IMR-90 (cell line): ENCODE measurements at regions of chr16 and their contacts with region 1.

Region 1: GRCh38 chr16:50806099-50807062 is 64.5 kb downstream of the CYLD start:
- DNase-seq: peak; percentile 87
- ATAC-seq: peak; percentile 92
- H3K4me3 ChIP-seq: peak overlapping the region; percentile 45
- H3K27ac ChIP-seq: no peak overlapping the region; the same call in 1 of the 2 replicates
- H3K4me1 ChIP-seq: peaks cover 4% of the 10 kb centered on the region
- H3K27me3 ChIP-seq: no peaks in the 10 kb centered on the region
- CTCF ChIP-seq: peak; percentile 84
- POLR2A ChIP-seq: no peak
- RAD21 ChIP-seq: peak; percentile 78

Region 2: DNA sequence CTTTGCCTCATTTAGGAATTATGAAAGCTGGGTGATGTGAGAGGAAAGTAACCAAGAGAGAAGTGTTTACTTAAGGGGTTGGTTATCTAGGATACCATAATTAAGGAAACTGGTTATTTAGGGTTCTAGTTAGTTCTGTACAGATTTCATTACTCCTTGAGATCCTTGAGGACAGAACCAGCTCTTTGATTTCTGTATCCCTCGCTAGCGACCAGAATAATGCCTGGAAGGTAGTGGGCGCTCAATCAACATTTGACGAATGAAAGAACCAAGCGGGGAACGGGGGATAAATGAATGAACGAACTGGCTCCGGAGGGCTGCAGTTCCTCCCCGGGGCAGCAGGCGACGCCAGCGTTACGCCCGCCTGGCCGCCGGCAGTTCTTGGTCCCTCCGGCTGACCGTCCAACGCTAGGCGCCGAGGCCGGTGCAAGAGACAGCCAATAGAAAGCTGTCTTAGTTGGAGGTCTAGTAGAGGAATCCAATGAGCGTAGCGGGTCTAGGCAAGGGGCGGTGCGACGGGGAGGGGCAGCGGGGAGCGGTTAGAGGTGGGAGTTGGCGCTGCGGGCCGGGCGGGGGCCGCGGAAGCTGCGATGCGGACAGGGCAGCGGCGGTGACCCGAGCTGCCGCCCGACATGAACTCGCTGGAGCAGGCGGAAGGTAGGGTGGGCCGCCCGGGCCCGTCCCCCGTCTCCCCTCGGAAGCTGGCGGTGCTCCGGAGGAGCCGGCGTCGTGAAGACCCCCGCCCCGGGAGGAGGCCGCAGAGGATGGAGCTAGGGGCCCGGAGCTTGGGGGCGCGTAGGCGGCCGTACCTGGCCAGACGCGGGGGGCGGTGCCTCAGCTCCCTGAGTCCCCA is 781.5 kb before region 1 on chr16 and contains the start of gene CNEP1R1:
- CTCF ChIA-PET with region 1: interaction called, 4 read pairs
- POLR2A ChIA-PET with region 1: no interaction called
- dilution Hi-C with region 1: no loop called
- in situ Hi-C with region 1: no loop called
- intact Hi-C with region 1: loop called (anchors 1 kb)
- DNase-seq: peak; percentile 95
- ATAC-seq: peak; percentile 97
- H3K4me3 ChIP-seq: peak within 1 kb of the TSS; percentile 100
- H3K27ac ChIP-seq: peak within 1 kb of the TSS; percentile 34
- H3K4me1 ChIP-seq: no peaks in the 10 kb centered on the region
- H3K27me3 ChIP-seq: peaks cover 4% of the 10 kb centered on the region; the same call in 1 of the 2 replicates
- CTCF ChIP-seq: peak; percentile 99
- POLR2A ChIP-seq: peak; percentile 45; the same call in 1 of the 2 replicates
- RAD21 ChIP-seq: peak; percentile 94
- total RNA-seq, gene CNEP1R1: 22.0 and 38.6 TPM in 2 replicates

Region 3: GRCh38 chr16:50326949-50327402 is 479.4 kb before region 1 on chr16:
- CTCF ChIA-PET with region 1: no interaction called
- POLR2A ChIA-PET with region 1: no interaction called
- dilution Hi-C with region 1: no loop called
- in situ Hi-C with region 1: no loop called
- intact Hi-C with region 1: loop called (anchors 5 kb)
- DNase-seq: peak; percentile 36
- ATAC-seq: peak; percentile 68
- H3K4me3 ChIP-seq: no peak overlapping the region
- H3K27ac ChIP-seq: no peak overlapping the region
- H3K4me1 ChIP-seq: peaks cover 3% of the 10 kb centered on the region; the same call in 1 of the 2 replicates
- H3K27me3 ChIP-seq: no peaks in the 10 kb centered on the region
- CTCF ChIP-seq: peak; percentile 46
- POLR2A ChIP-seq: no peak
- RAD21 ChIP-seq: peak; percentile 45

Region 4: DNA sequence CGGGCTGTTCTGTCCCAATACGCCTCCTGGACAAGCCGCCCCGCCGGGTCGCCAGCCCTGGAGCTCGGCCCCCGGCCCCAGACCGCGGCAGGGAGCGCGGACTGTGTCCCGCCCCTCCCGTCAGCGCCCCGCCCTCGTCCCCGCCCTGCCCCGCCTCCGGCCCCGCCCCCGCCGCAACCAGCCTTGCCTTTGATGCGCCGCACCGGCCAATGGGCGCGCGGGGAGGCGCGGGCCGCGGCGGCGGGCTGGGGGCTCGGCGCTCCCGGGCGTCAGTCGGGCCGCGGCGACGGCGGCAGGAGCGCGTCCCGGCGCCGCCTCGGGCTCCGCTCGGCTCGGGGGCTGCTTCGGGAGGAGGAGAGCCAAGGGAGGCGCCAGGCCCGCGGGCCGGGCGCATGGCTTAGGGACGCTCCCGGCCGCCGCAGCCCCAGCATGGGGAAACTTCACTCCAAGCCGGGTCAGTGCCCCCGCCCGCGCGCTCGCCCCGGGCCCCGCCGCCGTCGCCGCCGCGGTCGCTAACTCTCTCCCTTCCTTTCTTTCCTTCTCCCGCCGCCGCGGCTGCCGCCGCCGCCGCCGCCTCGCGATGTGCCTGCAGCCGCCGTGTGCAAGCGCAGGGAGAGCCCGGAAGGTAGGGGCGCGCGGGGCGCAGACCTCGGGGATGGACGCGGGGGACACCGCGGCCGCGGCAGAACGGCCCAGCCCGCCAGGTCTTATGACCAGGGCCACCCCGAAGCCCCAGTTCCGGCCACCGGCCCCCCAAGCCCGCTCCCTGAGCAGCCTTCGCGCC is 258.1 kb before region 1 on chr16 and contains the start of gene NKD1:
- CTCF ChIA-PET with region 1: no interaction called
- POLR2A ChIA-PET with region 1: no interaction called
- dilution Hi-C with region 1: no loop called
- in situ Hi-C with region 1: no loop called
- intact Hi-C with region 1: loop called (anchors 5 kb)
- DNase-seq: peak; percentile 9
- ATAC-seq: peak; percentile 97
- H3K4me3 ChIP-seq: peak within 1 kb of the TSS; percentile 77
- H3K27ac ChIP-seq: no peak within 1 kb of the TSS
- H3K4me1 ChIP-seq: peaks cover 2% of the 10 kb centered on the region; the same call in 1 of the 2 replicates
- H3K27me3 ChIP-seq: peaks cover 66% of the 10 kb centered on the region
- CTCF ChIP-seq: no peak
- POLR2A ChIP-seq: no peak
- RAD21 ChIP-seq: no peak
- total RNA-seq, gene NKD1: under 0.01 TPM in 1 of 2 replicates, not detected in the other

Region 5: GRCh38 chr16:50665128-50665878 is 141.1 kb before region 1 on chr16:
- CTCF ChIA-PET with region 1: interaction called, 17 read pairs
- POLR2A ChIA-PET with region 1: no interaction called
- dilution Hi-C with region 1: no loop called
- in situ Hi-C with region 1: no loop called
- intact Hi-C with region 1: loop called (anchors 1 kb)
- DNase-seq: peak; percentile 57
- ATAC-seq: peak; percentile 98
- H3K4me3 ChIP-seq: peak overlapping the region; percentile 47
- H3K27ac ChIP-seq: no peak overlapping the region
- H3K4me1 ChIP-seq: no peaks in the 10 kb centered on the region
- H3K27me3 ChIP-seq: no peaks in the 10 kb centered on the region; the same call in 1 of the 2 replicates
- CTCF ChIP-seq: peak; percentile 94
- POLR2A ChIP-seq: no peak
- RAD21 ChIP-seq: peak; percentile 83

Region 6: GRCh38 chr16:50681021-50681885 is 125.1 kb before region 1 on chr16 and contains the start of gene SNX20:
- CTCF ChIA-PET with region 1: interaction called, 4 read pairs
- POLR2A ChIA-PET with region 1: no interaction called
- dilution Hi-C with region 1: no loop called
- in situ Hi-C with region 1: loop called (anchors 10 kb)
- intact Hi-C with region 1: no loop called
- DNase-seq: no peak
- ATAC-seq: no peak
- H3K4me3 ChIP-seq: no peak within 1 kb of the TSS
- H3K27ac ChIP-seq: no peak within 1 kb of the TSS
- H3K4me1 ChIP-seq: no peaks in the 10 kb centered on the region
- H3K27me3 ChIP-seq: peaks cover 2% of the 10 kb centered on the region; the same call in 1 of the 2 replicates
- CTCF ChIP-seq: no peak
- POLR2A ChIP-seq: no peak
- RAD21 ChIP-seq: no peak
- total RNA-seq, gene SNX20: not detected in 2 replicates

Region 7: GRCh38 chr16:50841081-50841886 is 34.9 kb after region 1 on chr16:
- CTCF ChIA-PET with region 1: no interaction called
- POLR2A ChIA-PET with region 1: no interaction called
- dilution Hi-C with region 1: no loop called
- in situ Hi-C with region 1: no loop called
- intact Hi-C with region 1: no loop called
- DNase-seq: no peak
- ATAC-seq: no peak
- H3K4me3 ChIP-seq: no peak overlapping the region; the same call in 1 of the 2 replicates
- H3K27ac ChIP-seq: no peak overlapping the region
- H3K4me1 ChIP-seq: no peaks in the 10 kb centered on the region; the same call in 1 of the 2 replicates
- H3K27me3 ChIP-seq: peaks cover 26% of the 10 kb centered on the region
- CTCF ChIP-seq: no peak
- POLR2A ChIP-seq: no peak
- RAD21 ChIP-seq: no peak

Region 8: DNA sequence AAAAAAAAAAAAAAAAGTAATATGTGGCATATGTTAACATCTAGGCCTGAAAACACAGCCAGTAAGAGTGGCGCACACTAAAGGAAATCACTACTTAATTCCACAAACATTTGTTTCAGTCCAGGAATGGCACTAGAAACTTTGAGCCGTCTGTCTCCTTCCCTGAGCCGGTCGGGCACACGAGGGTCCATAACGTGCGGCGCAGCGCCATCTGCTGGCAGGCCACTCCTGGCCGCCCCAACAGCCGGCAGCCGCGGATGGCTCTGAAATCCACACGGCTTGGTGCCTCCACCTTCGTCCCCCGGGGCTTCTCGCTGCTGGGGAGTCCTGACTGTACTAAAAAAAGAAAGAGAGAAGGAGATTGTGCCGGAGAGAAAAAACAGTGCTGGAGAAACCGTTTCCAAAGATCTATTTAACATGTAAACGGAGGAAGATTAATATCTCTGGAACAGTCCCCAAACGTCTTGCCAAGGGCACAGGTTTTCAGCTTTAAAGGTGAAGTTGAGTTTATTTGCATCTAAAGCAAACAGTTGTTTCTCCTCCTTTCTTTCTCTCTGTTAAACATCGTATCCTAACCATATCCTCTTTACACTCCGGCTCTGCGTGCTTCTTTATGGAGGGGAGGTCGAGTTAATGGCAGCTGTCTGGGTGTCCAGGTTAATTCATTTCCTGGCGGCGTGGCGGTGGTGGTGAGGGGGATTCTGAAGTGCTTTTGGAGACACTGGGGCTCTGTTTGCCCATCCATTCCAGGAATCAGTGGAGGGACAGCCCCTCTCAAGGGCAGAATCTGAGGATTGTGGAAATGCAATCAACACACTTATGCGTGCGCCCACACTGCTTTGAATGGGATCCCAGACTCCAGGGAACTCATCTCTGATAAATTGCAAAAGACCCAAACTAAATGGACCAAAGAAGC is 956.0 kb after region 1 on chr16:
- CTCF ChIA-PET with region 1: no interaction called
- POLR2A ChIA-PET with region 1: no interaction called
- dilution Hi-C with region 1: no loop called
- in situ Hi-C with region 1: no loop called
- intact Hi-C with region 1: loop called (anchors 2 kb)
- DNase-seq: peak; percentile 70
- ATAC-seq: peak; percentile 97
- H3K4me3 ChIP-seq: no peak overlapping the region
- H3K27ac ChIP-seq: no peak overlapping the region
- H3K4me1 ChIP-seq: no peaks in the 10 kb centered on the region; the same call in 1 of the 2 replicates
- H3K27me3 ChIP-seq: no peaks in the 10 kb centered on the region
- CTCF ChIP-seq: peak; percentile 90
- POLR2A ChIP-seq: no peak
- RAD21 ChIP-seq: peak; percentile 93